Calu3 (cell line): ENCODE measurements at regions of chr1 and their contacts with region 1.

Region 1: DNA sequence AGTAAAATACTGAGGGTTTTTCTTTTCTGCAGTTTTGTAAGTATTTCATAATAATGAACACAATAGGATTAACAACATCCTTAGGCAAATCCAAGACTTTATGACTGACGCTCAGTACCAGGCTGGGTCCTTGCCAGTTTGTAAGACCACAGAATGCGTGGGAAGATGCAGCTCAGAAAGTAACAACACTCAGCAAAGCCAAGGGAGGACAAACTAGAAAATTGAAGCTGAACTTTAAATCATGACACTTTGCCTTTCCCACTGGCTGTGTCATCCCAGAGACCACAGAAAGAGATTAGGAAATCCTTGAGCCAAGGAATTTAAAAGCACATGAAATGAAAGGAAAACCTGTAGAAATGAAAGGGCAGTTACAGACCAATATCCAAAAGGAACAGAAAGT is 426.3 kb upstream of the CHRM3 start:
- DNase-seq: no peak
- H3K4me3 Mint-ChIP-seq: peak overlapping the region; percentile 33
- H3K27ac Mint-ChIP-seq: peak overlapping the region; percentile 17
- H3K4me1 Mint-ChIP-seq: peaks cover 38% of the 10 kb centered on the region
- H3K27me3 Mint-ChIP-seq: no peaks in the 10 kb centered on the region
- CTCF ChIP-seq: no peak

Region 2: DNA sequence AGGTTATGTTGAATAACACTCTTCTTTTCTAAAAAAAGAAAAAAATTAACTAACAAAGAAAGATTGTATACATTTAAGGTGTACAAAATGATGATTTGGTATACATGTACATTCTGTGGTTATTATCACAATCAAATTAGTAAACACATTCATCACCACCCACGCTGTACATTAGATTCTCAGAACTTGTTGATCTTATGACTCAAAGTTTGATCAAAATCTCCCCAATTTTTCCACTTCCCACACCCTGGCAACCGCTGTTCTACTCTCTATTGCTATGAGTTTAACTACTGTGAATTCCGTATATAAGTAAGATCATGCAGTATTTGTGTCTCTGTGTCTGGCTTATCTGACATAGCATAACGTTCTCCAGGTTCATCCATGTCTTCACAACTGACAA is 43.2 kb before region 1 on chr1:
- CTCF ChIA-PET with region 1: no interaction called
- intact Hi-C with region 1: no loop called
- DNase-seq: no peak
- H3K4me3 Mint-ChIP-seq: no peak overlapping the region
- H3K27ac Mint-ChIP-seq: no peak overlapping the region
- H3K4me1 Mint-ChIP-seq: peaks cover 9% of the 10 kb centered on the region
- H3K27me3 Mint-ChIP-seq: no peaks in the 10 kb centered on the region
- CTCF ChIP-seq: no peak

Region 3: GRCh38 chr1:238950017-238950416 is 10.1 kb before region 1 on chr1:
- CTCF ChIA-PET with region 1: no interaction called
- intact Hi-C with region 1: no loop called
- DNase-seq: no peak
- H3K4me3 Mint-ChIP-seq: no peak overlapping the region
- H3K27ac Mint-ChIP-seq: no peak overlapping the region
- H3K4me1 Mint-ChIP-seq: peaks cover 16% of the 10 kb centered on the region
- H3K27me3 Mint-ChIP-seq: no peaks in the 10 kb centered on the region
- CTCF ChIP-seq: no peak

Region 4: GRCh38 chr1:239125027-239125426 is 165.0 kb after region 1 on chr1:
- CTCF ChIA-PET with region 1: no interaction called
- intact Hi-C with region 1: no loop called
- DNase-seq: no peak
- H3K4me3 Mint-ChIP-seq: no peak overlapping the region
- H3K27ac Mint-ChIP-seq: no peak overlapping the region
- H3K4me1 Mint-ChIP-seq: no peaks in the 10 kb centered on the region
- H3K27me3 Mint-ChIP-seq: no peaks in the 10 kb centered on the region
- CTCF ChIP-seq: no peak

Region 5: DNA sequence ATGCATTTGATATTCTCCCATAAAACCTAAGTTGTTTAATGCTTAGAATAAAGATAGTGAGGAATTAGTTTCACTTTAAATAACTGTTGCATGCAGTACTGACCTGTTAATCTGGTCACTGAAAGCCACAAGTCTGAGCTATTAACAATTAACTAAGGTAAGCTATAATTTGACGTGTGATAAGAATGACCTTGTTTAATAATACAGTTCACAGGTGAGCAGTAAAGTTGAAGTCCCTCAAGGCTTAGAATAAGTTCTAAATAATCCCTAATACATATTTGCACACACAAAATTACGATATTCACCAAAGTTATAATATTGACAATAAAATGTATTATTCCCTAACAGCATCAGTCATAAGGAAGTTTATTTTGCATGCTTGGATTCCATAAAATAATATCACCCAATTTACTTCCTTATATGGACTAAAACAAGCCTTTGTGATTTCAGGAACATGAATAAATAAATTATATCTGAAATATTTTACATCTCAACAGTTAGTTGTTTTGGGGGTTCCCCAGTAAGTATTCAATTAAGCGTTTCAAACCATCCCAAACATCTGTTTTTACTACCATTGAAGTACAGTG is 355.7 kb after region 1 on chr1:
- CTCF ChIA-PET with region 1: no interaction called
- intact Hi-C with region 1: loop called (anchors 1 kb)
- DNase-seq: no peak
- H3K4me3 Mint-ChIP-seq: peak overlapping the region; percentile 63
- H3K27ac Mint-ChIP-seq: peak overlapping the region; percentile 50
- H3K4me1 Mint-ChIP-seq: no peaks in the 10 kb centered on the region
- H3K27me3 Mint-ChIP-seq: no peaks in the 10 kb centered on the region
- CTCF ChIP-seq: no peak

Region 6: DNA sequence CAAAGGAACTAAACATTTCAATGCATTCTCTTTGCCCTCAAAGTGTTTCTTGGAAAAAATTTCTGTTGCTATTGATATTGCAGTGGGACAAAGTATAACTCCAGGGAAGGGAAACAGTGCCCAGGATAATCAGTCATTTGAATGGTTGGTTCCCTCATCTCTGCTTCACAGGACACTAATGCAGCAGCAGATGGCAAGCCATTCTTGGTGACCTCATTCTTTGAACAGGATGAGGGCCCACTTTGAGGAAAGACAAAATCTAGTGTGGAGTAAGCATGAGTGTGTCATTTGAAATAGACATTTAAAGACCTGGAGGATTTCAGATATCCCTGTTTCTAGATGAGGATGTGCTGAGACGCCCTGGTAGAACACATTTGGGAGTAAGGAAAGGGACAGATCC is 458.6 kb after region 1 on chr1:
- CTCF ChIA-PET with region 1: no interaction called
- intact Hi-C with region 1: no loop called
- DNase-seq: no peak
- H3K4me3 Mint-ChIP-seq: no peak overlapping the region
- H3K27ac Mint-ChIP-seq: no peak overlapping the region
- H3K4me1 Mint-ChIP-seq: no peaks in the 10 kb centered on the region
- H3K27me3 Mint-ChIP-seq: no peaks in the 10 kb centered on the region
- CTCF ChIP-seq: no peak